ENCODE measurements at regions of chr3 and their contacts with region 1.

Region 1: DNA sequence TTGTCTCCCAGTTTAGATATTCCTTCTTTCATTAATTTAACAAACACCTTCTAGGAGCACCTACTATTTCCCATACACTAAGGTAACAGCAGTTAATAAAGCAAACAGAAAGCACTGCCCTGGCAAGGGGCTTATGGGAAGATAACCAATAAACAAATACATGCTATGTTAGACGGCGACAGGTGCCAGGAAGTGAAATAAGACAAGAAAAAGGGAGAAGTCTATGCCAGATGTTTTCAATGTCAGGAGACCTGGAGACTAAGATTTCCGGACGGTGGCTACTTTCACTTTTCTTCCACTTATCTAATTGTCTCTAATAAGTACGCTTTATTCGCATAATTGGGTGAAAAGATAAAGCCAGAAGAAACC is 32.5 kb upstream of the ZNF445 start:
- DNase-seq: peak in 3 of 9 donors; percentile 3 to 19 (median 12)
- ATAC-seq: peak; percentile 23
- H3K4me3 ChIP-seq: peak overlapping the region; percentile 73
- H3K4me3 Mint-ChIP-seq: peak overlapping the region; percentile 93 to 98 (median 96)
- H3K27ac ChIP-seq: peak overlapping the region; percentile 92
- H3K27ac Mint-ChIP-seq: peak overlapping the region; percentile 78 to 97 (median 93)
- H3K4me1 ChIP-seq: peaks cover 6 to 19% of the 10 kb centered on the region in 2 donors
- H3K4me1 Mint-ChIP-seq: peaks cover 30 to 52% (median 48%) of the 10 kb centered on the region in 7 donors
- H3K27me3 ChIP-seq: no peaks in the 10 kb centered on the region
- H3K27me3 Mint-ChIP-seq: no peaks in the 10 kb centered on the region

Region 2: GRCh38 chr3:44323341-44323955 is 186.5 kb before region 1 on chr3:
- CTCF ChIA-PET with region 1: no interaction called
- POLR2A ChIA-PET with region 1: interaction called, 4 read pairs
- intact Hi-C with region 1: loop called (anchors 1 to 5 kb)
- DNase-seq: peak in 8 of 9 donors; percentile 20 to 60 (median 41)
- ATAC-seq: peak; percentile 69
- H3K4me3 ChIP-seq: no peak overlapping the region
- H3K4me3 Mint-ChIP-seq: no peak overlapping the region
- H3K27ac ChIP-seq: no peak overlapping the region
- H3K27ac Mint-ChIP-seq: no peak overlapping the region
- H3K4me1 ChIP-seq: no peaks in the 10 kb centered on the region
- H3K4me1 Mint-ChIP-seq: peaks cover 0 to 3% (median 0%) of the 10 kb centered on the region in 7 donors
- H3K27me3 ChIP-seq: no peaks in the 10 kb centered on the region
- H3K27me3 Mint-ChIP-seq: peaks cover 6 to 37% (median 11%) of the 10 kb centered on the region in 5 donors

Region 3: DNA sequence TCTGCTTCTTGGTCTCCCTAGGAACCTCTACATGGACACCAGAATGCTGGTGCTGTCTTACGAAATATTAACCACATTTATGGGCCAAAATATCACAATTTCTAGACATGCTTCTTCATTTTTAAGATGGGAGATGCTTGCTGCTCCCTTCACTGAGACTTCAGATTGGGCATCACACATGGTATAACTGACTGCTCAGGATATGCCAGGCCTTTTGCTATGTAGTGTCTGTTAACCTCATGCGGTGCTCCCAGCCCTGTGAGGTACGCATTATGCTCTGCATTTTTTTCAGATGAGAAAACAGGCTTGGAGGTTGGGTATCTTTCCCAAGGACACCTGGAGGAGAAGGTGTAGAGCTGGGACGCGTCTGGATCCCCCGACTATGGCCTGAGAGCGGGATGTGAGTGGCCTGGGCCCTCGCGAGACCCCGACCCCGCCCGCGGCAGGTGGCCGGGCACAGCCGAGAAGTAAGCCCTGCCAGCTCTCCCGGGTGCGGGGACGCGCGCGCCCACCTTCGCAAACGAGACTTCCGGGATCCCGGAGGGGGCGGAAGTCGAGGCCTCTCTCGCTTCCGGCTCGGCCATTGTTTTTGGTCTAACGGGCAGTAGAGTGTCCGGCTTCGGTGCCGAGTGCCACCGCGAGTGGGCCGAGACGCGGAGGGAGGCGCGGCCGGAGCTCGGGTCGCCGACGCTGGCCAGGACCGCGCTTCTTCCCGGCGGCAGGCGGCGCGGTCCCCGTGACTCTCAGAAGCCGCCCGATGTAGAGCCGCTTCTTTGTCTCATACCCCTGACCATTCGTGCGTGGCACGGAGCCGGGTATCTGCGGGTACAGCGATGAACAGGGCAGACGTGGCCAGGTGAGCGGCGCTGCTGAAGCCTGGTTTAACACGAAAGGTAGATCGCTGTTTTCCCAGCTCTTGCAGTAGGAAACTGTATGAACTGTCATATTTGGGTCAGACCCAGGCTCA is 44.9 kb after region 1 on chr3 and contains the start of gene ZKSCAN7:
- CTCF ChIA-PET with region 1: interaction called, 3 read pairs
- POLR2A ChIA-PET with region 1: no interaction called
- intact Hi-C with region 1: loop called in 1 of 2 experiments (anchors 1 kb)
- DNase-seq: peak; percentile 12 to 49 (median 42)
- ATAC-seq: peak; percentile 71
- H3K4me3 ChIP-seq: peak within 1 kb of the TSS; percentile 87
- H3K4me3 Mint-ChIP-seq: peak within 1 kb of the TSS; percentile 78 to 94 (median 91)
- H3K27ac ChIP-seq: peak within 1 kb of the TSS; percentile 47
- H3K27ac Mint-ChIP-seq: peak within 1 kb of the TSS; percentile 6 to 94 (median 82)
- H3K4me1 ChIP-seq: peaks cover 9 to 14% of the 10 kb centered on the region in 2 donors
- H3K4me1 Mint-ChIP-seq: peaks cover 10 to 34% (median 26%) of the 10 kb centered on the region in 7 donors
- H3K27me3 ChIP-seq: no peaks in the 10 kb centered on the region
- H3K27me3 Mint-ChIP-seq: peaks cover 0 to 4% (median 1%) of the 10 kb centered on the region in 5 donors
- total RNA-seq, gene ZKSCAN7: 1.1 to 4.5 (median 1.7) TPM

Region 4: DNA sequence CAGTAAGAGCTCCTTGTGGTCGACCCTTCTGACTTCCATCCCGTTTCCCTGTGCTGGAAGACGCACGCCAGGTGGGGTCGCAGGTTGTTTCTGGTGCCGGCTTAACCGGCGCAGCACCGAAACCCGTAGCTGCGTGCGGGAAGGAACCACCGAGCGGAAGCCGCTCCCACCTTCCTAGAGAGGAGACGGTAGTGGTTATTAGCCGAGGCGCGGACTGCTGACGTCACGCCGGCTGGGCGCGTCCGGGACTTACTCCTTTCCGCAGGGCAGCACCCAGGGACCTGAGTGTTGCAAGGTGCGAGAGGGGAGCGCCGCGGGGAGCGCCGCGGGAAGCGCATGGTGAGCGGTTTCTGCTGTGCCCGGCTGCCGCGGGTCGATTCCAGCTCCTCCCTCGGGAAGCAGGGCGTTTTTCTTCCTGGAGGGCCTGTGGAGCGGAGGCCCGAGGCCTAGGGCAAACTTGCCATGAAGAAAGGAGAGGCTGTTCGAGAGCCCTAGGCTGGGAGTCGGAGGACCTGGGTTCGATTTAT is 219.5 kb after region 1 on chr3 and contains the start of gene ZNF501:
- CTCF ChIA-PET with region 1: interaction called, 3 read pairs
- POLR2A ChIA-PET with region 1: no interaction called
- intact Hi-C with region 1: loop called in 1 of 2 experiments (anchors 1 kb)
- DNase-seq: peak; percentile 65 to 83 (median 75)
- ATAC-seq: peak; percentile 97
- H3K4me3 ChIP-seq: peak within 1 kb of the TSS; percentile 75
- H3K4me3 Mint-ChIP-seq: peak within 1 kb of the TSS; percentile 90 to 99 (median 92)
- H3K27ac ChIP-seq: peak within 1 kb of the TSS; percentile 45
- H3K27ac Mint-ChIP-seq: peak within 1 kb of the TSS; percentile 61 to 91 (median 84)
- H3K4me1 ChIP-seq: no peaks in the 10 kb centered on the region
- H3K4me1 Mint-ChIP-seq: peaks cover 2 to 20% (median 15%) of the 10 kb centered on the region in 7 donors
- H3K27me3 ChIP-seq: no peaks in the 10 kb centered on the region
- H3K27me3 Mint-ChIP-seq: no peaks in the 10 kb centered on the region
- total RNA-seq, gene ZNF501: 1.1 to 5.3 (median 2.6) TPM

Region 5: GRCh38 chr3:44976002-44976815 is 466.2 kb after region 1 on chr3 and contains the starts of genes EXOSC7 and ZDHHC3:
- CTCF ChIA-PET with region 1: no interaction called
- POLR2A ChIA-PET with region 1: interaction called, 6 read pairs
- intact Hi-C with region 1: loop called in 1 of 2 experiments (anchors 2 kb)
- DNase-seq: peak; percentile 73 to 89 (median 85)
- ATAC-seq: peak; percentile 98
- H3K4me3 ChIP-seq: peak within 1 kb of the TSS; percentile 94
- H3K4me3 Mint-ChIP-seq: peak within 1 kb of the TSS; percentile 90 to 97 (median 94)
- H3K27ac ChIP-seq: peak within 1 kb of the TSS; percentile 98
- H3K27ac Mint-ChIP-seq: peak within 1 kb of the TSS; percentile 85 to 97 (median 94)
- H3K4me1 ChIP-seq: peaks cover 21 to 37% of the 10 kb centered on the region in 2 donors
- H3K4me1 Mint-ChIP-seq: peaks cover 50 to 87% (median 79%) of the 10 kb centered on the region in 7 donors
- H3K27me3 ChIP-seq: no peaks in the 10 kb centered on the region
- H3K27me3 Mint-ChIP-seq: no peaks in the 10 kb centered on the region
- total RNA-seq, gene EXOSC7: 30.7 to 57.9 (median 44.3) TPM
- total RNA-seq, gene ZDHHC3: 38.5 to 54.0 (median 48.8) TPM